BJ (cell line): ENCODE measurements at regions of chr4 and their contacts with region 1.

Region 1: DNA sequence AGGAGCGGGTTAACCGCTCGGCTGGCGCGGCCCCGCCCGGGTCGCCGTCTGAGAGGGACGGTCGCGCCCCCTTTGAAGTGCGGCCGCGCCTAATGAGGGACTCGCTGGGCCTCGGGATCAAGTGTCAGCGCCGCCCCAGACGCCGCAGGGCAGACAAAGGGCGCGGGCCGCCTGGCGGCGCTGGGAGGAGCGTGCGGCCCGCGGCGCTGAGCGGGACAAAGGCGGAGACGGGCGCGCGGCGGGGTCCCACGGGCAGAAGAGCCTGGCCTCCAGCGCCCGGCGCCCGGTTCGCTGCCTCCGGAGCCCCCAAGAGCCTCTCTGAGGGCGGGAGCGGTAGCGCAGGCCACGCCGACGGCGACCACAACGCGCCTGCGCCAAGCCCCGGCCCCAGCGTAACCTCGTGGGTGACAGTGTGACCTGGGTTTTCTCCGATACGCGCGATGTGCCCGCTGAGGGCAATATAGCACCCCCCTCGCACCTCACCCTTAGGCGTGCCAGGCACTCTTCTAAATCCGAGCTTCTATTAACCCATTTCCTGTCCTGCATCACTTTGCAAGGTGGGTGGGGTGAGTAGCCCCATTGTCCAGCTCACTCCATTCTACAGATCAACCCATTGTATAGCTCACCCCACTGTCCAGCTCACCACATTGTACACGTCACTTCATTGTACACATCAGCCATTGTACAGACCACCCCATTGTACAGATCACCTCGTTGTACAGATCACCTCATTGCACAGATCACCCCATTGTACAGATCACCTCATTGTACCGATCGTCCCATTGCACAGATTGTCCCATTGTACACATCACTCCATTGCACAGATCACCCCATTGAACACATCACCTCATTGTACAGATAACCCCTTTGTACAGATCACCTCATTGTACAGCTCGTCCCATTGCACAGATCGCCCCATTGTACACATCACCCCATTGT is 33.7 kb upstream of the STX18 start:
- DNase-seq: no peak
- H3K4me3 ChIP-seq: peak overlapping the region; percentile 57
- H3K27me3 ChIP-seq: no peaks in the 10 kb centered on the region
- CTCF ChIP-seq: no peak

Region 2: DNA sequence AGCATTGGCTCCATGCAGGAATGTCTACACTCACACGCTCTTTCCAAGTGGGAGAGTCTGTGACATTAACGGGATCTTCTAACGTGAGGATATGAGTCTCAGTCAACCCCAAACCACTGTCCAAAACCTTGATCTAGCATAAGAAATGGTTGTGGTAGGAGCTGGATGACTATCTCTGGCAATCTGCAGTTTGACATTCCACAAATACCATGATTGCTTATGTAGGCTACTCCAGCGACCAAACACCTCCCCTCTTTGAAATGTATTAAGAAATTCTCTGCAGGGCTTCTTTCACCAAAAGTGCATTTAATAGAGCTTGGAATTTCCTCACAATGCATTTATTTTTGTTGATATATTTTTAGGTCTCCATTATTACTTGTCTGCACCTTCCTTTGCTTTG is 19.6 kb before region 1 on chr4:
- CTCF ChIA-PET with region 1: interaction called, 14 read pairs
- POLR2A ChIA-PET with region 1: no interaction called
- DNase-seq: peak; percentile 90
- H3K4me3 ChIP-seq: no peak overlapping the region
- H3K27me3 ChIP-seq: no peaks in the 10 kb centered on the region
- CTCF ChIP-seq: no peak

Region 3: DNA sequence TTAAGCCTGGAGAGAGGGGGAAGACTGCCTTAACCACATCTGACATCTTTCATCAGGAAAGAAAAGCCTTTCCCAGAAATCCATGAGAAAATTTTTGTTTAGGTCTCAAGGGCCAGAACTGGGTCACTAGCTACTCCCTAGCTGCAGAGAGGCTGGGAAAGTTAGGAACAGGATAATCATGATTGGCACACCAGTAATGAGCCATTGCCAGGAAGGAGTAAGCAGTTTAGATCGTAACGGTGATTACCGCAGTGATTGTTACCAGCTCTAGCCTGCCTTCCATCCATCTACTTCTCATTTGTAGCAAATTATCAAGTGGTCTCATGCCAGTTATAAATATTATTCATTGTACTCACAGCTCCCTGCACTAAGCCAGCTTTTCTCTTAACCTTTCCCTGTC is 11.0 kb before region 1 on chr4:
- CTCF ChIA-PET with region 1: interaction called, 18 read pairs
- POLR2A ChIA-PET with region 1: no interaction called
- DNase-seq: no peak
- H3K4me3 ChIP-seq: no peak overlapping the region
- H3K27me3 ChIP-seq: no peaks in the 10 kb centered on the region
- CTCF ChIP-seq: no peak